ENCODE measurements at regions of chr1 and their contacts with region 1.

Region 1: DNA sequence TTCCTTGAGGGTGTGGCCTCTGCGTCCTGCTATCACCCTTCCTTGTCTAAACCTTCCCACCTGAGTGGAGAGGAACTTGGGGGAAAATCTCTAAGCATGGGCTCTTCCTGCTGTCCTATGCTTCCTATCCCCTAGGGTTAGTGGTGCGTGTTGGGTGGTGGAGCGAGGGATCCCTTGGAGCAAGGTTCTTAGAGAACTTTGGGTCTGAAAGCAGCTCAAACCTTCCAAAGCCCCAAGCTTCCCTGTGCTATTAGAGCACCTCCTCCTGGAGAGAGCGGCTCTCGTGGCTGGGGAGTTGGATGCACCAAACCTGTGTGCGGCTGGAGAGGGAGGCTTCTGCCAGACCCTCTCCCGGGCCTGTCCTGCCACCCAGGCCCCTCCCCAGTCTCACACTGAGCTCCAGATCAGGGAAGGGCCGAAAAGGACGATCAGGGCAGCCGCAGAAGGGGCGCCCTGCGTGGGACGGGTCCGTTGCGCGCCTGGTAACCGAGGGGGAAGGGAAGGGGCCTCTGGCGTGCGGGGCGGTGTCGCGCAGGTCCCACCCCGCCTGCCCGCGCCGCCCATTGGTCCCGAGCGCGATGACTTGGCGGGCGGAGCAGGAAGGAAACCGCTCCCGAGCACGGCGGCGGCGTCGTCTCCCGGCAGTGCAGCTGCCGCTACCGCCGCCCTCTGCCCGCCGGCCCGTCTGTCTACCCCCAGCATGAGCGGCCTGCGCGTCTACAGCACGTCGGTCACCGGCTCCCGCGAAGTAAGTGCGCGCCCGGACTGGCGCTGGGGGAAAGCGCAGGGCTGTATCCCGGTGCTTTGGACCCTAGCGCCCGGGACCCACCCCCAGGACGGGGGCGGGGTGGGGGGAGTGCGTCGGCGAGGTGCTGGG is at the start of gene SH3BGRL3:
- DNase-seq: peak; percentile 77
- ATAC-seq: peak; percentile 60
- H3K4me3 Mint-ChIP-seq: peak within 1 kb of the TSS; percentile 88
- H3K27ac Mint-ChIP-seq: peak within 1 kb of the TSS; percentile 85
- H3K4me1 Mint-ChIP-seq: peaks cover 82% of the 10 kb centered on the region
- H3K27me3 Mint-ChIP-seq: no peaks in the 10 kb centered on the region
- CTCF ChIP-seq: no peak
- total RNA-seq, gene SH3BGRL3: 265 and 285 TPM in 2 replicates

Region 2: GRCh38 chr1:25743826-25744581 is 535.7 kb before region 1 on chr1:
- CTCF ChIA-PET with region 1: no interaction called
- POLR2A ChIA-PET with region 1: no interaction called
- intact Hi-C with region 1: no loop called
- DNase-seq: no peak
- ATAC-seq: no peak
- H3K4me3 Mint-ChIP-seq: no peak overlapping the region
- H3K27ac Mint-ChIP-seq: no peak overlapping the region
- H3K4me1 Mint-ChIP-seq: no peaks in the 10 kb centered on the region
- H3K27me3 Mint-ChIP-seq: peaks cover 2% of the 10 kb centered on the region
- CTCF ChIP-seq: no peak

Region 3: DNA sequence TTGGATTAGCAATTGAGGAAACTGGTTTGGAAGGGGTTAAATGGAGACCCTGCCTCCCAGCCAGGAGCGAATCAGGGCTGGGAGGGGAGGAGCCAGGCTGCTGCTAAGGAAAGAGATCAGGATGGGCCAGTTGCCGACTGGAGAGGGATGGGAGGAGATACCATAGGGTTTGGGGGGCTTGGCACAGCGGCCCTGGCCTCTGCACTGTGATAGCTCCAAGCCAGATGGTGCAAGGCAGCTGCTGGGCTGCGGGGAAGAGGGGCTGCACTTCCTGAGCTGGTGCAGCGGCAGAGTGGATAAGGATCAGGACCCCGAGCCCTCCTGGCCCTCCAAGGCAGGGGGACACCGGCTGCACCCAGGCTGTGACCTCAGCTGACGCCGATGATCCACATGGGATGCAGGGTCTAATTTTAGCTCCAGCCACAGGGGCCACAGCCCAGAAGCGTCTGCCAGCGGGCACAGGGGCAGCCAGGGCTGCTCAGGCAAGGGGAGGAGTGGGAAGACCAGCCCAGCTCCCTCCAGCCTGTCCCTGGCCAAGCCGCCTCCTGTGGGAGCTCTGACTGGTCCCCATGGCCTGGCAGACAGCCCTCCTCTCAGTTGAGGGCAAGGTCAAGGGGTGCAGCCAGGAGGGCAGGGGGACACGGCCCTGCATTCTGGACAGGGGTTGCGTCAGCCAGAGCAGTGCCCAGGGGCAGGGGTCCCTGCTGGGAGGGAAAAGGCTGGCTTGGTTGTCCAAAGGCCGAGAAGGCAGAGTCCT is 257.9 kb before region 1 on chr1 and contains the start of gene EXTL1:
- CTCF ChIA-PET with region 1: no interaction called
- POLR2A ChIA-PET with region 1: no interaction called
- intact Hi-C with region 1: no loop called
- DNase-seq: no peak
- ATAC-seq: no peak
- H3K4me3 Mint-ChIP-seq: no peak within 1 kb of the TSS
- H3K27ac Mint-ChIP-seq: no peak within 1 kb of the TSS
- H3K4me1 Mint-ChIP-seq: no peaks in the 10 kb centered on the region
- H3K27me3 Mint-ChIP-seq: peaks cover 6% of the 10 kb centered on the region
- CTCF ChIP-seq: no peak
- total RNA-seq, gene EXTL1: not detected in 2 replicates

Region 4: DNA sequence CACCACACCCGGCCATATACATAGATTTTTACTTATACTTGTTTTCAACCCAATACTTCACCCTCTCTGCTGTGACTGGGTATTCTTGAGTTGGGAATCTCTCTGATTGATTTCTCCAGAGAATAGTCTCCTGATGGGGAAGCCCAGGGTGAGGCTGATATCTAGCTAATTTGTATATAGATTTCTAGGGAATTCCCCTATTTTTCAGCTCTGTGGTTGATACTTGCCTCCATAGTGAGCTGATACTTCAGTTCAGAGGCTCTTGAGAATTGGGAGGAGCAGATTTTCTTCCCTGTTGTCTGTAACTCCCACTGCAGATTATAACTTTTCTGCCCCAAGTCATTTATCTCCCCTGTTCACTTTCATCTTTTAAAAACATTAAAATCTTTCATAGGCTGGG is 14.3 kb before region 1 on chr1:
- CTCF ChIA-PET with region 1: interaction called, 11 read pairs
- POLR2A ChIA-PET with region 1: interaction called, 5 read pairs
- intact Hi-C with region 1: no loop called
- DNase-seq: no peak
- ATAC-seq: peak; percentile 64
- H3K4me3 Mint-ChIP-seq: peak overlapping the region; percentile 6
- H3K27ac Mint-ChIP-seq: no peak overlapping the region
- H3K4me1 Mint-ChIP-seq: peaks cover 11% of the 10 kb centered on the region
- H3K27me3 Mint-ChIP-seq: no peaks in the 10 kb centered on the region
- CTCF ChIP-seq: no peak

Region 5: GRCh38 chr1:26391450-26391849 is 111.8 kb after region 1 on chr1:
- CTCF ChIA-PET with region 1: interaction called, 3 read pairs
- POLR2A ChIA-PET with region 1: no interaction called
- intact Hi-C with region 1: loop called (anchors 1 kb)
- DNase-seq: no peak
- ATAC-seq: peak; percentile 28
- H3K4me3 Mint-ChIP-seq: no peak overlapping the region
- H3K27ac Mint-ChIP-seq: no peak overlapping the region
- H3K4me1 Mint-ChIP-seq: no peaks in the 10 kb centered on the region
- H3K27me3 Mint-ChIP-seq: peaks cover 19% of the 10 kb centered on the region
- CTCF ChIP-seq: no peak

Region 6: DNA sequence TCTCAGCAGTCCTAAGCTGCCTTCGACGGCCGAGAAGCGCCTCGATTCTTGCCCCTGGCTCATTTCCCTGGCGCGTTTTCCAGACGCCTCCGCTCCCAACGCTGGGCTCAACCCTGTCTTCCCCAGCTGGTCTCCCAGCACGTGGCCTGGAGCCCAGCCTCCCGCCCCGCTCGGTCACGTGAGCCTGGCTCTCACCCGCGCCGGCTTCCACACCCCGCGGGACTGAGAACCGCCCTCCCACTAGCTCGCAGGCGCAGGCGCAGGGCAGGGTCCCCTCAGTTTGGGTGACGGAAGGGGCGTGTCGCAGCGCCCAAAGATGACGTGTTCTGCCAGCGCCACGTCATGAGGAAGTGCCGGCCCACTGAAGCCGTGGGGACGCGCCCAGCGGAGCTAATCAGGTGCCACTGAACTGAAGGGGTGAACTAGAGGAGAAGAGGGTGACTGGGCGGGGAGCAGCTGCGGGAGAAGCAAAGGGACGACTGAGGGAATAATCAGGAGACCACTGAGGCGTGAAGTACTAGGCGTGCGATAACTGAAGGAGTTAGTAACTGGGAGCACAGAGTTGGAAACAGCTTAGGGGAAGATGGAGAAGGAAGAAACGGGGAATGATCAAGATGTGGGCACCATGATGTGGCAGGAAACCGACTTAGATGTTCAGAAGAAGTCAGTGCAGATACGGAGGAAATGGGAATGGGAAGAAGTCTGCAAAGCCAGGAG is 152.4 kb after region 1 on chr1 and contains the start of gene DHDDS:
- CTCF ChIA-PET with region 1: no interaction called
- POLR2A ChIA-PET with region 1: interaction called, 3 read pairs
- intact Hi-C with region 1: loop called (anchors 5 kb)
- DNase-seq: peak; percentile 99
- ATAC-seq: peak; percentile 95
- H3K4me3 Mint-ChIP-seq: peak within 1 kb of the TSS; percentile 95
- H3K27ac Mint-ChIP-seq: peak within 1 kb of the TSS; percentile 94
- H3K4me1 Mint-ChIP-seq: peaks cover 23% of the 10 kb centered on the region
- H3K27me3 Mint-ChIP-seq: no peaks in the 10 kb centered on the region
- CTCF ChIP-seq: no peak
- total RNA-seq, gene DHDDS: 53.0 and 65.0 TPM in 2 replicates

Measured in activated B cell treated with CpG ODN at 0.5 μM for 24 hours (primary cell).